PC-3 (cell line): ENCODE measurements at regions of chr7 and their contacts with region 1.

Region 1: GRCh38 chr7:77536413-77537135 is 521 bp upstream of the PTPN12 start:
- DNase-seq: peak; percentile 96
- ATAC-seq: peak; percentile 83
- H3K4me3 ChIP-seq: peak overlapping the region; percentile 79
- H3K27ac ChIP-seq: peak overlapping the region; percentile 64
- H3K4me1 ChIP-seq: peaks cover 30% of the 10 kb centered on the region
- H3K27me3 ChIP-seq: no peaks in the 10 kb centered on the region
- CTCF ChIP-seq: no peak

Region 2: DNA sequence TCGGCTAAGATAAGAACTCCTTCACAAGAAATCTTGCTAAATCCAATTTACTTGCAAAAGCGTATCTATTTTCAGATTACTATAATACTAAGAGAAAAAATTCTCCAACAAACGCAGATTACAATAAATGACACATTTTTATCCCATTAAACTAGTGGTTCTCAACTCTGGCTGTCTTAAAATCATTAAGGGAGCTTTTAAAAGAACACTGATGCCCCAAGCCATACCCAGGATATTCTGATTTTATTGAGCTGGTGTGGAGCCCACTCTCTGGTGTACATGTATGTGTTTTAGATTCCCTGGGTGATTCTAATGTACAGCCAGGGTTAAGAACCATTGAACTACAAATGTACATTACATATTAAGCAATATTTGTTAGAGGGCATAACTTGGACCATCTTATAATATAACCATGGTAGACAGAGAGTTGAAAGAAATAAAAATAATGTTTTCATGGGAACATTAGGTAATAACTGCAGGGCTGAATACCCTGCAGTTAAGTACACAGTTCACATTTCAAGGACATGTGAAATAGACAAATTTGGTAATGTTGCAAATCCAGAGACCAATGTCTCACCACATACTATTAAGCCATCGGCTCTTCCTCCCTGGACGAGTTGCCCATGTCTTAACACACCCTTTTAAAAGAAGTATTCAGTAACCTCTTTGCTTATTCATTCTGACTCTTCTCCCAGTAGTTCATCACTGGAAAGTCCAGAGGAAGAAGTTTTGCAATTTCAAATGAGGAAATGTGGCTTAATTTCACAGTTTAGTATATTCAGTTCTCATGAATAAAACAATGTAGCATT is 126.6 kb before region 1 on chr7:
- CTCF ChIA-PET with region 1: no interaction called
- POLR2A ChIA-PET with region 1: interaction called, 5 read pairs
- intact Hi-C with region 1: loop called (anchors 2 kb)
- DNase-seq: peak; percentile 81
- ATAC-seq: peak; percentile 57
- H3K4me3 ChIP-seq: peak overlapping the region; percentile 53
- H3K27ac ChIP-seq: peak overlapping the region; percentile 86
- H3K4me1 ChIP-seq: peaks cover 50% of the 10 kb centered on the region
- H3K27me3 ChIP-seq: no peaks in the 10 kb centered on the region
- CTCF ChIP-seq: no peak

Region 3: DNA sequence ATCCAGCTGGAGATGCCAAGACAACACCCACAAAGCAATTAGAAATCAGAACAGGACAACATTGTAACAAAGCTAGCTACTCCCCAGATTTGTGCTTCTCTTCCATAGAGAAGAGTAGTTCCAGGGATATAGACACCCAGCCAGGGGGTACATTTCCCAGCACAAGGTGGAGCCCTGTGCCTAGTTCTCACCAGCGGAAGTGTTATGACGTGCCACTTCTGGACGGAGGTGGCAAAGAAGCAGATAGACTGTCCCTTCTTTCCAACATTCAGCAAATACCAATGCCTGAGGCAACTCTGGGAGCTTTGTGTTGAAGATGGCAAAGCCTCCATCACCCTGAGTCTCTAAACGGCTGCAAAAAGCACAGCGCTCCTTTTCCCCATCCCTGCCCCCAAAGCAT is 97.0 kb before region 1 on chr7:
- CTCF ChIA-PET with region 1: no interaction called
- POLR2A ChIA-PET with region 1: no interaction called
- intact Hi-C with region 1: loop called (anchors 1 kb)
- DNase-seq: peak; percentile 65
- ATAC-seq: peak; percentile 70
- H3K4me3 ChIP-seq: no peak overlapping the region
- H3K27ac ChIP-seq: no peak overlapping the region
- H3K4me1 ChIP-seq: peaks cover 42% of the 10 kb centered on the region
- H3K27me3 ChIP-seq: no peaks in the 10 kb centered on the region
- CTCF ChIP-seq: peak; percentile 70

Region 4: DNA sequence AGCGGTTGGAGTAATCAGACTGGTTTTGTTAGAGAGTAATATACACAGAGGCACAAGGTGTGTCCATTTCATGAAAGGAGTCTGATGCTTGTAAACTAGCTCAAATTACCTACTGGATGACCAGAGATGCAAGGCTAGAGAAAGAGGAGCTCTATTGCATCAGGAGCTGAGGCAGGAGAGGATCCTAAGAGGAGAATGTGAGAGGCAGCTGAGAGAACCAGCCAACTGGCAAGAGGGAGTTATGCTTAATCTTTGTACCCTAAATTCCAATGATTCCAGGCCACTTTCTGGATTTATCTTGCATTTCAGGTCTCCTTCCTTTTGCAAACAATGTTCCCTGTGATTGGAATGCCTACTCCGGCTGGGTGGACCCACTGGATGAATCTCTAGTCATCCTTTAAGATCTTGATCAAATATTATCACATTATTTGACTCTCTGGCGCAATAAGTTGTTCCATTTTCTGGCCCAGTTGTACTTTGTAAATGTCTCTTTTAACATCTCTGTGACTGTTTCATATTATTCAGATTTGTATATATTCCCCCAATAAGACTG is 57.0 kb before region 1 on chr7:
- CTCF ChIA-PET with region 1: no interaction called
- POLR2A ChIA-PET with region 1: no interaction called
- intact Hi-C with region 1: loop called (anchors 5 kb)
- DNase-seq: peak; percentile 76
- ATAC-seq: peak; percentile 92
- H3K4me3 ChIP-seq: no peak overlapping the region
- H3K27ac ChIP-seq: peak overlapping the region; percentile 43
- H3K4me1 ChIP-seq: peaks cover 31% of the 10 kb centered on the region
- H3K27me3 ChIP-seq: no peaks in the 10 kb centered on the region
- CTCF ChIP-seq: no peak

Region 5: GRCh38 chr7:77561352-77561751 is 24.8 kb after region 1 on chr7:
- CTCF ChIA-PET with region 1: no interaction called
- POLR2A ChIA-PET with region 1: interaction called, 21 read pairs
- intact Hi-C with region 1: no loop called
- DNase-seq: no peak
- ATAC-seq: no peak
- H3K4me3 ChIP-seq: no peak overlapping the region
- H3K27ac ChIP-seq: no peak overlapping the region
- H3K4me1 ChIP-seq: peaks cover 14% of the 10 kb centered on the region
- H3K27me3 ChIP-seq: no peaks in the 10 kb centered on the region
- CTCF ChIP-seq: no peak

Region 6: GRCh38 chr7:77600952-77601351 is 64.4 kb after region 1 on chr7:
- CTCF ChIA-PET with region 1: no interaction called
- POLR2A ChIA-PET with region 1: interaction called, 10 read pairs
- intact Hi-C with region 1: no loop called
- DNase-seq: no peak
- ATAC-seq: no peak
- H3K4me3 ChIP-seq: no peak overlapping the region
- H3K27ac ChIP-seq: no peak overlapping the region
- H3K4me1 ChIP-seq: no peaks in the 10 kb centered on the region
- H3K27me3 ChIP-seq: no peaks in the 10 kb centered on the region
- CTCF ChIP-seq: no peak